ENCODE measurements at regions of chr16 and their contacts with region 1.

Region 1: GRCh38 chr16:48963901-48964615 is 317.6 kb downstream of the CBLN1 start:
- DNase-seq: peak; percentile 89
- H3K4me3 ChIP-seq: no peak overlapping the region
- H3K27ac ChIP-seq: peak overlapping the region; percentile 64
- H3K4me1 ChIP-seq: peaks cover 52% of the 10 kb centered on the region
- H3K27me3 ChIP-seq: no peaks in the 10 kb centered on the region
- CTCF ChIP-seq: no peak

Region 2: GRCh38 chr16:48918520-48919258 is 45.4 kb before region 1 on chr16:
- CTCF ChIA-PET with region 1: no interaction called
- dilution Hi-C with region 1: no loop called
- in situ Hi-C with region 1: no loop called
- intact Hi-C with region 1: loop called (anchors 5 kb)
- DNase-seq: peak; percentile 86
- H3K4me3 ChIP-seq: no peak overlapping the region
- H3K27ac ChIP-seq: peak overlapping the region; percentile 61
- H3K4me1 ChIP-seq: peaks cover 15% of the 10 kb centered on the region
- H3K27me3 ChIP-seq: no peaks in the 10 kb centered on the region
- CTCF ChIP-seq: peak; percentile 14 to 16

Region 3: GRCh38 chr16:48949636-48950035 is 14.4 kb before region 1 on chr16:
- CTCF ChIA-PET with region 1: no interaction called
- dilution Hi-C with region 1: no loop called
- in situ Hi-C with region 1: no loop called
- intact Hi-C with region 1: loop called (anchors 2 kb)
- DNase-seq: peak; percentile 35
- H3K4me3 ChIP-seq: no peak overlapping the region
- H3K27ac ChIP-seq: no peak overlapping the region
- H3K4me1 ChIP-seq: peaks cover 6% of the 10 kb centered on the region
- H3K27me3 ChIP-seq: peaks cover 4% of the 10 kb centered on the region
- CTCF ChIP-seq: no peak

Region 4: DNA sequence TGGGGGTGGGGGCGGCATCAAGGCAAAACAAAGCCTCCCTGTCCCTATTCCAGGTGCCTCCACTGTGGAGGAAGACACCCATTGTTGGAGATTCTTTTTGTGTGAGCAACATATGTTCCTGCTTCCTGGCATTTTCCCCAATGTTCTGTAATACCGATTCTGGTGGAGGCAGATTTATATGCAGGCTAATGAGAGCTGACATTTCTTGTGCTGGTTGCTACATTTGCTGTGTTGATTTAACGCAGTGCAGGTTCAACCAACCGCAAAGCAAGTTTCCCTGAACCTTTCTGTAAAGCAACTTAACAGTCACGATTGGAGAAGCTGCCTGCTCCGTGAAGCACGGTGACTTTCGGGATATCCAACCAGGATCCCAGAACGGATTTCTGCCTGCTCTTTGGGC is 57.1 kb after region 1 on chr16:
- CTCF ChIA-PET with region 1: no interaction called
- dilution Hi-C with region 1: loop called (anchors 5 kb)
- in situ Hi-C with region 1: no loop called
- intact Hi-C with region 1: no loop called
- DNase-seq: peak; percentile 72
- H3K4me3 ChIP-seq: no peak overlapping the region
- H3K27ac ChIP-seq: no peak overlapping the region
- H3K4me1 ChIP-seq: peaks cover 42% of the 10 kb centered on the region
- H3K27me3 ChIP-seq: no peaks in the 10 kb centered on the region
- CTCF ChIP-seq: no peak

Region 5: DNA sequence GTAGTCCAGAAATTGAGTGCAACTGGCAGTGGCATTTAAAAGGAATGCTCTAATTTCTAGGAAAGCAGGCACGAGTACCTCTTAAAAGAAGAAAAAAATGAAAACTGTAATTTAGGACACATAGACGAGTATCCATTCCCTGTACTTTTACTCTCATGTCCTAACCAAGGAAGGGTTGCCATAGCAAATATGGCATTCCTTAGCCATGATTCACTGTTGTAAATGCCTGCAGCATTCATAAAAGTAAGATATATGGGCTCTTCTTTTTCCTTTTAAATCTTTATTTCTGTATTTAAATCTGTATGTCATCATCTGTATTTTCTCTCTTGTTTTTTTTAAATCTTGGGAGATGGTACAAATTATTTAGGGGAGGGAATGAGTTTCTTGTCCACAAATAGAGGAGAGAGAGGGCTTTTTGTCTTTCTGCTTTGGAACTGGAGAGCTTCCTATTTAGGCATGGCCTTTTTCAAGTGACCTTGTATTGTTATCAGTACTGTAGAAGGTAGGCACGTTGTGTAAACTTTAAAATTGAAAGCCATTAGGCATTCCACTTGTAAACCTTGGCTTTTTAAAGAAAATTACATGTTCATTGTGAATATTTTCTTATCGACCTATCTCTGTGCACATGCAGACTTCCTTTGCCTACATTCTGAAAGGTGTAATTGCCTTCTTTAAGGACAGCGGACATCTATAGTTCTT is 1239.0 kb after region 1 on chr16:
- CTCF ChIA-PET with region 1: no interaction called
- dilution Hi-C with region 1: no loop called
- in situ Hi-C with region 1: no loop called
- intact Hi-C with region 1: loop called (anchors 10 kb)
- DNase-seq: peak; percentile 82
- H3K4me3 ChIP-seq: peak overlapping the region in 2 of 3 experiments; percentile 28 to 36
- H3K27ac ChIP-seq: peak overlapping the region; percentile 98
- H3K4me1 ChIP-seq: peaks cover 44% of the 10 kb centered on the region
- H3K27me3 ChIP-seq: no peaks in the 10 kb centered on the region
- CTCF ChIP-seq: no peak

Measured in mammary epithelial cell (primary cell).